K562 (cell line): ENCODE measurements at regions of chr5 and their contacts with region 1.

Region 1: DNA sequence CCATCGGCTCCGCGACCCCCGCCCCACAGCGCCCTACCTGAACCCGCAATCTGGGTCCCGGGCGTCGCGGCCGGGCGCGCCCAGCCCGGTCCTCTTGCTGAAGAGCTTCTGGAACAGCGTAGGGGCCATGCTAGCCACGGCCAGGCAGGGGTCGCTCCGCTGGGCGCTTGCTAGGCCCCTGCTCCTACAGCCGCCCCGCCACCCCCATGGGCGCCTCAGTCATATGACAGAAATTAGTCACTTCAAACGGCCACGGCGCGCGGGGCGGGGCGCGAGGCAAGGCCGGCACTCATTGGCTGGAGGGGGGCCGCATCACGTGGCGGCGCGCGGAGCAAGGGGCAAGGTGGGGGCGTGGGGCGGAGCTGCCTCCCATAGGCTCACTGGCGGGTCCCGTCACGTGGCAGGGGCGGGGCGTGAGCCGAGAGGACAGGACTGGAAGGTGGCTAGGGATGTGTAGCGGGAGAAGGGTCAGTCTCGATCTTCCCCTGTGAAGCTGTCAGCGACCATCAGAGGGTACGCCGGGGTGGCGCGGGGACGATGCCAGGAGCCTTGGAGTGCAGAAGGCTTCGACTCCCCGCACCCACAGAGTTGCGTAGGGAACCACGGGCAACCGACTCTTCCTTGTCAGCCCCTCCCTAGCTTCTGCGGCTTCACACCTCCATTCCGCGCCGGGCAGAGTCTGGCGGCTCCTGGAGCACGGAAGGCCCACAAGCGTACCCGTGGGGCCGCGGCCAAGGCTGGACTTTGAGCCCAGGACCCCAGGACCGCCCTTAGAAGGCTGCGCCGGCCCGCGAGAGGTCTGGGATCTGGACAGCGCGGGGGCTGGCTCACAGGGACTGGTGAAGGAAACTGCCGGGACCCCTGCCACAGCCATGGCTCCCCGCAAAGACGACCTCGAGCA is at the start of gene FNIP1:
- DNase-seq: peak; percentile 99 to 100 (median 99)
- ATAC-seq: peak; percentile 91
- H3K4me3 ChIP-seq: peak within 1 kb of the TSS; percentile 75
- H3K27ac ChIP-seq: peak within 1 kb of the TSS; percentile 98
- H3K4me1 ChIP-seq: peaks cover 14 to 27% of the 10 kb centered on the region in 2 experiments
- H3K27me3 ChIP-seq: no peaks in the 10 kb centered on the region
- CTCF ChIP-seq: peak in 2 of 3 experiments; percentile 20 to 26; a peak in 1 of 6 replicates
- EP300 ChIP-seq: peak; percentile 72
- POLR2A ChIP-seq: peak; percentile 95
- RAD21 ChIP-seq: peak in 1 of 2 experiments; percentile 2; a peak in 2 of 4 replicates
- polyA plus RNA-seq, gene FNIP1: 5.0 to 8.7 TPM

Region 2: DNA sequence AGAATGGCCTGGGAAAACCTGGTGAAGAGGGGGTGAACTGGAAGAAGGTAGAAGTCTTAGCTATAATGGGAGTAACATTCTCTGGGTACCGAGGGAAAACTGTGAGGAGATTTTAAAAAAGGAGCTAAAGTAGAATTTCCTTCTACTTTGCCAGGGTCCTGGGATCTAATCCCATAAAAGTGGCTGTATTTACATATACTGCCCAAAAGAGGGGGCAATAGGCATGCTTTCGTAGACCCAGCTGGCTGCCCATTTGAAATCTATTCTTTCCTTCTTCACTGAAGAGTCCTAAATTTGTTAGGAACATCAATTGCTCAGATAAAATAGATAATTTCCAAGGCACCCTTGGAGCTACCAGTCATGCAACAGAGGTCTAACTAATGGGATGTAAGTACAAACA is 374.0 kb before region 1 on chr5:
- CTCF ChIA-PET with region 1: no interaction called
- POLR2A ChIA-PET with region 1: no interaction called
- in situ Hi-C with region 1: no loop called
- intact Hi-C with region 1: loop called (anchors 10 kb)
- DNase-seq: peak in 2 of 4 experiments; percentile 20 to 38
- ATAC-seq: peak; percentile 82
- H3K4me3 ChIP-seq: no peak overlapping the region
- H3K27ac ChIP-seq: no peak overlapping the region
- H3K4me1 ChIP-seq: no peaks in the 10 kb centered on the region
- H3K27me3 ChIP-seq: no peaks in the 10 kb centered on the region
- CTCF ChIP-seq: peak; percentile 44 to 67 (median 64); a peak in 5 of 6 replicates
- EP300 ChIP-seq: no peak
- POLR2A ChIP-seq: no peak
- RAD21 ChIP-seq: peak; percentile 8 to 71; a peak in 2 of 4 replicates

Region 3: GRCh38 chr5:131521252-131521651 is 275.8 kb before region 1 on chr5:
- CTCF ChIA-PET with region 1: no interaction called
- POLR2A ChIA-PET with region 1: no interaction called
- in situ Hi-C with region 1: no loop called
- intact Hi-C with region 1: no loop called
- DNase-seq: no peak
- ATAC-seq: no peak
- H3K4me3 ChIP-seq: no peak overlapping the region
- H3K27ac ChIP-seq: no peak overlapping the region
- H3K4me1 ChIP-seq: no peaks in the 10 kb centered on the region
- H3K27me3 ChIP-seq: no peaks in the 10 kb centered on the region
- CTCF ChIP-seq: no peak
- EP300 ChIP-seq: no peak
- POLR2A ChIP-seq: no peak
- RAD21 ChIP-seq: no peak

Region 4: GRCh38 chr5:131589510-131590348 is 207.3 kb before region 1 on chr5:
- CTCF ChIA-PET with region 1: no interaction called
- POLR2A ChIA-PET with region 1: no interaction called
- in situ Hi-C with region 1: no loop called
- intact Hi-C with region 1: loop called (anchors 5 kb)
- DNase-seq: peak; percentile 29 to 65 (median 42)
- ATAC-seq: peak; percentile 93
- H3K4me3 ChIP-seq: no peak overlapping the region
- H3K27ac ChIP-seq: no peak overlapping the region
- H3K4me1 ChIP-seq: no peaks in the 10 kb centered on the region; a peak in 2 of 5 replicates
- H3K27me3 ChIP-seq: no peaks in the 10 kb centered on the region
- CTCF ChIP-seq: peak; percentile 70 to 87 (median 84)
- EP300 ChIP-seq: no peak
- POLR2A ChIP-seq: no peak
- RAD21 ChIP-seq: peak; percentile 94 to 96

Region 5: DNA sequence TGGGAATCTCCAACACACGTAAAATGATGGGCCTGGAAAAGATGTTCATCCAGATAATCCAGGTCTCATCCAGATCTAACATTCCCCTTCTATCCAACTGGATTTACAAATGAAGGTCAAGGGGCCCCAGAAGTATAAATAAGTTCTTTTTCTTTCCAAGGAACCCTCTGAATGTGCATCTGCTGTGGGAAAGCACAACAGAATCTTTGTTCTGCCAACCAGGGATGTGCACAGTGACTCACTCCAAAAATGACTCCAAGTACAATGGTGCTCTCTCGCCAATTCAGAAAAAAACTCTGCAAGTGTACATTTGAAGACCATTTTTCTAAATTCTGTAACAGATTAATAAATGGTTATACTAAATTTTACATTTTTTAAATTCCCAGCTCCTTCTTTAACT is 174.4 kb before region 1 on chr5:
- CTCF ChIA-PET with region 1: no interaction called
- POLR2A ChIA-PET with region 1: no interaction called
- in situ Hi-C with region 1: no loop called
- intact Hi-C with region 1: no loop called
- DNase-seq: no peak
- ATAC-seq: no peak
- H3K4me3 ChIP-seq: no peak overlapping the region
- H3K27ac ChIP-seq: no peak overlapping the region
- H3K4me1 ChIP-seq: peaks cover 0 to 8% of the 10 kb centered on the region in 2 experiments; a peak in 2 of 5 replicates
- H3K27me3 ChIP-seq: no peaks in the 10 kb centered on the region
- CTCF ChIP-seq: no peak
- EP300 ChIP-seq: no peak
- POLR2A ChIP-seq: no peak
- RAD21 ChIP-seq: no peak

Region 6: DNA sequence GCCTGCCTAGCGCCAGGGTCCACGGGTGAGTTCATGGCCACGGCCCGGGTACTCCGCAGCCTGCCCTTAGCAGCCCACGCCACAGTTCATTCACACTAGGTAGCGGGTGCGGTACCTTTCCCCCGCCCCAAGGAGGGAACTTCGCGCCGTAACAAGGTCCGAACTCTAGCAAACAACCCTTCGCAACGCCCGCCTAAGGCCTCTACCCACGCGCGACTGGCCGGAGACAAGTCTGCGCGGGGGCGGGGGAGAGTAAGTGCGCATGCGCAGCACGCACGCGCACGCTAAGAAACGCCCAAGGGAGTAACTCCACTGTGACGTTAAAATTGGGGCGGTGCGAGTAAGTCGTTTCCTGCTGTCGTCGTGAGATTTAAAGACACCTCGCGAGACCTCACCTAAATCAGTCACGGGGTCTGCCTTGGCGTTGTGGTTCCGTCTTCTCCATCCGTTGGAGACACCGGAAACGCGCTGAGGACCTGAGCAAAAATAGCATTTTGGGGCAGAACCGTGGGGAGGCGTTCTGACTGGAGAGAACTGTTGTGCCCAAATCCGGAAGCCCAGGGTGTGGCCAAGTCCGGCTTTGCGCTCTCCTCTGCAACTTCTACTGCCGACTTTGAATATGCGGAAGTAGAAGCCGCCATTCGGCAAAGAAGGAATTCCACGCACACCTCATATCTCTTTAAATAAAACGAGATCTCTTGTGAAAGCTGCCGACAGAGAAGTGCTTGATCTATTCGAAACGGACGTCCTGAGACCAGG is 161.9 kb before region 1 on chr5 and contains the start of gene RAPGEF6:
- CTCF ChIA-PET with region 1: no interaction called
- POLR2A ChIA-PET with region 1: interaction called, 3 read pairs
- in situ Hi-C with region 1: no loop called
- intact Hi-C with region 1: loop called (anchors 2 kb)
- DNase-seq: peak; percentile 89 to 99 (median 90)
- ATAC-seq: peak; percentile 87
- H3K4me3 ChIP-seq: peak within 1 kb of the TSS; percentile 70
- H3K27ac ChIP-seq: peak within 1 kb of the TSS; percentile 99
- H3K4me1 ChIP-seq: peaks cover 18 to 52% of the 10 kb centered on the region in 2 experiments
- H3K27me3 ChIP-seq: no peaks in the 10 kb centered on the region
- CTCF ChIP-seq: peak; percentile 4 to 34 (median 21); a peak in 5 of 6 replicates
- EP300 ChIP-seq: peak; percentile 74
- POLR2A ChIP-seq: peak; percentile 93
- RAD21 ChIP-seq: no peak; a peak in 1 of 4 replicates
- polyA plus RNA-seq, gene RAPGEF6: 2.7 to 3.6 TPM

Region 7: DNA sequence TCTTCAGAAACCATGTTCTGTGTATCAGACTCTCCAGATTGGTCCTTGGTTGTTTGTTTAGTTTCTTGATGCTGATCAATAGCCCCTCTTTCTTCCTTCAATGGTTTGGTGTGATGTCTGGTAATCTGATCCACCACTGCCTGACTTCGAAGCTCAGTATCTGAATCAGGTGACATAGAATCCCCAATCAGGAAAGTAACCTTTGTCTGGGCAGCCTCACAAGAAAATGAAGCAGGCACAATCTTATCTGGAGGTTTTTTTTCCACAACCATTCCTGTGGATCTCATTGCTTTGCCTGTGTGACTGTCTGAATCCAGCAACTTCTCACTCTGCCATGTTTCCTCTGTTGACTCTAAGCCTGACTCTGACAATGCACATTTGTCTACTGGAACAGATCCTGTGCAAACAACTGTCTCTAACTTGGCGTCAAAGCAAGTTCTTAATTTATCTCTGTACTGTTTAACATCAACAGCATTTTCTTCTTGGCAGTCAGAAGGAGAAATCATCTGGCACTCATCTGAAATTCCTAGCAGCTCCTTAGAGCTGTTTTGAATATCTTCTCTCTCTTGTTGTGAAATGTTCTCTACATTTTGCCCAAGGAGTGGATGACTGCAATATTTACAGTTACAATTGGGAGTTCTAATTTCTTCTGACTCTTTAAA is 124.9 kb before region 1 on chr5:
- CTCF ChIA-PET with region 1: no interaction called
- POLR2A ChIA-PET with region 1: no interaction called
- in situ Hi-C with region 1: no loop called
- intact Hi-C with region 1: loop called (anchors 10 kb)
- DNase-seq: peak in 1 of 4 experiments; percentile 10
- ATAC-seq: peak; percentile 69
- H3K4me3 ChIP-seq: no peak overlapping the region
- H3K27ac ChIP-seq: peak overlapping the region; percentile 59; the same call in 2 of the 3 replicates
- H3K4me1 ChIP-seq: peaks cover 0 to 8% of the 10 kb centered on the region in 2 experiments; a peak in 2 of 5 replicates
- H3K27me3 ChIP-seq: no peaks in the 10 kb centered on the region
- CTCF ChIP-seq: no peak
- EP300 ChIP-seq: no peak
- POLR2A ChIP-seq: no peak
- RAD21 ChIP-seq: no peak

Region 8: DNA sequence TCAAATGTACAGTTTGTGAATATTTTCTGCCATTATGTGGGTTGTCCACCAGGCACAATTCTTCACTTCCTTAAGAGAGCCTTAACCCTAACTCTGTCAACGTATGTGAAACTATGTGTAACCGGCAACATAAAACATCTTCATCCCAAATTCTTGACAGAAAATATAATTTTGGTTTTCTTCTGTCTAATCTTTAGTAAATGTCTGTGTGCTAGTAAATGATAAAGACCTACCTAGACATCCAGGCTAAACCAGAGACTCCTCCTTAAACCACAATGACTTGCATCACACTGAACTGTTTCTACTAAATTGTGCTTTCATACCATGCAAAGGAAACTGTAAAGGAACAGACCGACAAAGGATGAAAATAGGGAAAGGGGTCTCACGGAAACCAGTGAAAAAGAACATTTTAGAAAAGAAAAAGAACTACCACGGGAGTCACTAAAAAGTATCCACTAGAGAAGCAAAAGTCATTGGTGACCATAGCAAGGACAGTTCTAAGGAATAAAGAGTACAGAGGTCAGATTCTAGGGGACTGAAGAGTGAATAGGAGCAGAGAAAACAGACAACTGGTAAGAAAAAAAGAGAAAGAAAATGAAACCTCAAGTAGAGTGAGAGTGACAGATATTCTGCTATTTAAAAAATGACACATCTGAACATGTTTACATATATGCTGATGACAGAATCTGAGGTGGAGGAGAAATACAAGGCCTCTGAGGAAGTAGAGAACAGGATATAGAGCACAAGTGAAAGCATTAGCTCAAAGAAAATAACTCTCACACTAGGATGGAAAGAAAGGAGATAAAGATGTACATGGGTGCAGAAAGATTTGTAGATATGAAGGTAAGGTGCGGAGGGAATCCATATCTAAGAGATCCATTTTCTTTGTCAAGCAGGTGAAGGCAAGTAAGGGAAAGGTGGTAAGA is 49.6 kb before region 1 on chr5:
- CTCF ChIA-PET with region 1: interaction called, 3 read pairs
- POLR2A ChIA-PET with region 1: interaction called, 4 read pairs
- in situ Hi-C with region 1: no loop called
- intact Hi-C with region 1: loop called (anchors 1 kb)
- DNase-seq: peak; percentile 68 to 88 (median 76)
- ATAC-seq: peak; percentile 88
- H3K4me3 ChIP-seq: peak overlapping the region; percentile 2; the same call in 1 of the 2 replicates
- H3K27ac ChIP-seq: peak overlapping the region; percentile 86
- H3K4me1 ChIP-seq: peaks cover 18 to 55% of the 10 kb centered on the region in 2 experiments
- H3K27me3 ChIP-seq: no peaks in the 10 kb centered on the region
- CTCF ChIP-seq: peak in 1 of 3 experiments; percentile 30; a peak in 2 of 6 replicates
- EP300 ChIP-seq: peak; percentile 98
- POLR2A ChIP-seq: 0 out of 2 replicates have a peak, but pooled peaks have one; percentile 23
- RAD21 ChIP-seq: peak in 1 of 2 experiments; percentile 6; a peak in 2 of 4 replicates

Region 9: GRCh38 chr5:131996207-131997025 is 199.4 kb after region 1 on chr5:
- CTCF ChIA-PET with region 1: no interaction called
- POLR2A ChIA-PET with region 1: no interaction called
- in situ Hi-C with region 1: no loop called
- intact Hi-C with region 1: loop called (anchors 2 kb)
- DNase-seq: peak; percentile 21 to 84 (median 48)
- ATAC-seq: peak; percentile 52
- H3K4me3 ChIP-seq: no peak overlapping the region
- H3K27ac ChIP-seq: peak overlapping the region; percentile 49
- H3K4me1 ChIP-seq: peaks cover 54 to 58% of the 10 kb centered on the region in 2 experiments
- H3K27me3 ChIP-seq: no peaks in the 10 kb centered on the region
- CTCF ChIP-seq: no peak
- EP300 ChIP-seq: peak; percentile 91
- POLR2A ChIP-seq: no peak
- RAD21 ChIP-seq: no peak; a peak in 1 of 4 replicates

Region 10: GRCh38 chr5:132019857-132020555 is 223.0 kb after region 1 on chr5:
- CTCF ChIA-PET with region 1: no interaction called
- POLR2A ChIA-PET with region 1: no interaction called
- in situ Hi-C with region 1: no loop called
- intact Hi-C with region 1: no loop called
- DNase-seq: no peak
- ATAC-seq: peak; percentile 46; the same call in 2 of the 3 replicates
- H3K4me3 ChIP-seq: no peak overlapping the region
- H3K27ac ChIP-seq: no peak overlapping the region
- H3K4me1 ChIP-seq: peaks cover 4 to 9% of the 10 kb centered on the region in 2 experiments; a peak in 3 of 5 replicates
- H3K27me3 ChIP-seq: peaks cover 18 to 35% of the 10 kb centered on the region in 2 experiments
- CTCF ChIP-seq: no peak
- EP300 ChIP-seq: no peak
- POLR2A ChIP-seq: no peak
- RAD21 ChIP-seq: no peak